ENCODE measurements at regions of chr15 and their contacts with region 1.

Region 1: GRCh38 chr15:51281368-51281967 is 56.9 kb downstream of the CYP19A1 start:
- DNase-seq: peak in 1 of 2 experiments; percentile 79
- H3K4me3 ChIP-seq: no peak overlapping the region
- H3K27ac ChIP-seq: no peak overlapping the region
- H3K4me1 ChIP-seq: no peaks in the 10 kb centered on the region
- H3K27me3 ChIP-seq: no peaks in the 10 kb centered on the region
- CTCF ChIP-seq: peak; percentile 80 to 83 (median 81)
- EP300 ChIP-seq: no peak
- POLR2A ChIP-seq: no peak
- RAD21 ChIP-seq: peak; percentile 80 to 86

Region 2: DNA sequence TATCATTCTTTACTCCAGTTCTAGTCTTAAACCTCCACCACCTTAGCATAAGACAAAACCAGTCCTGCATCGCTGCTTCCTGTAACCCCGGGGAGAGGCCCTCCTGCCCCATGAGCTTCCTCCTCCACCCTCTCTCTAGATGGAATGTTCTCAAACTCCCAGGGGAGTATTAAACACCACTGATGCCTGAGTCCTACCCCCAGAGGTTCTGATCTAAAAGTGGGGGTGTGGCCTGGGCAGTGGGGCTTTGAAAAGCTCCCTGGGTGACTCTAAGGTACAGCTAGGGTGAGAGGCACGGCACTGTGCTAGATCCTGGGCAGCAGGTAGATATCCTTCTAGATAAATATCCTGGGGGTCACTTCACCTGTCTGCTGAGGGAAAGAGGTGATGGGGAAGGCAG is 46.9 kb before region 1 on chr15:
- CTCF ChIA-PET with region 1: interaction called, 23 read pairs
- POLR2A ChIA-PET with region 1: no interaction called
- DNase-seq: no peak
- H3K4me3 ChIP-seq: no peak overlapping the region
- H3K27ac ChIP-seq: no peak overlapping the region
- H3K4me1 ChIP-seq: peaks cover 0 to 2% (median 1%) of the 10 kb centered on the region in 4 experiments; a peak in 1 of 7 replicates
- H3K27me3 ChIP-seq: no peaks in the 10 kb centered on the region
- CTCF ChIP-seq: no peak
- EP300 ChIP-seq: no peak
- POLR2A ChIP-seq: no peak
- RAD21 ChIP-seq: no peak

Region 3: GRCh38 chr15:51267703-51268083 is 13.8 kb before region 1 on chr15:
- CTCF ChIA-PET with region 1: interaction called, 28 read pairs
- POLR2A ChIA-PET with region 1: no interaction called
- DNase-seq: peak in 1 of 2 experiments; percentile 52
- H3K4me3 ChIP-seq: peak overlapping the region; percentile 53 to 69 (median 56)
- H3K27ac ChIP-seq: no peak overlapping the region
- H3K4me1 ChIP-seq: peaks cover 0 to 8% (median 3%) of the 10 kb centered on the region in 4 experiments; a peak in 5 of 7 replicates
- H3K27me3 ChIP-seq: peaks cover 3 to 29% (median 25%) of the 10 kb centered on the region in 4 experiments
- CTCF ChIP-seq: no peak
- EP300 ChIP-seq: no peak
- POLR2A ChIP-seq: no peak
- RAD21 ChIP-seq: no peak

Region 4: GRCh38 chr15:51312166-51313097 is 31.0 kb after region 1 on chr15:
- CTCF ChIA-PET with region 1: interaction called, 20 read pairs
- POLR2A ChIA-PET with region 1: no interaction called
- DNase-seq: no peak
- H3K4me3 ChIP-seq: no peak overlapping the region
- H3K27ac ChIP-seq: no peak overlapping the region
- H3K4me1 ChIP-seq: no peaks in the 10 kb centered on the region
- H3K27me3 ChIP-seq: 0 out of 7 replicates have a peak, but pooled peaks cover 0 to 3% (median 0%) of the 10 kb centered on the region in 4 experiments
- CTCF ChIP-seq: no peak
- EP300 ChIP-seq: no peak
- POLR2A ChIP-seq: no peak
- RAD21 ChIP-seq: no peak

Region 5: DNA sequence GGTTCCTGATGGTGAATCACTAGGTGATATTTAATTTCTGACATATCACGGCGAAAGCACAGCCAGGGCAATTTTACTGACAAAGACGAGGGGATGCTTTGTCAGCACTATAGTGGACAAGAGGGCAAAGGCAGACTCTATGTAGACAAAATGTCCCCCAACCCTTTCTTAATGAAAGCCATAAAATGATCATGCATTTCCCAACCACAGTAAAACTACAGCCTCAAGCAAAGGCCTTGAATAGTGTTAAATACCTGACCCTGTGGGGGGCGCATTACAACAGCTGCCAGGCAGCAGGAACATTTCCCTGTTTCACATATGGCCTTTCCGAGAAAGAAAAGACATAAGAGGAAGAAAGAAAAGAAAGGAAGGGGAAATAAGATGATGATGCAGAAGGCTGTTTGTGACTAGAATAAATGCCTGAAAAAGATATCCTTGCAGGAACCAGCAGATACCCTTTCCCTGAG is 109.5 kb after region 1 on chr15:
- CTCF ChIA-PET with region 1: interaction called, 11 read pairs
- POLR2A ChIA-PET with region 1: no interaction called
- DNase-seq: peak in 1 of 2 experiments; percentile 62
- H3K4me3 ChIP-seq: no peak overlapping the region
- H3K27ac ChIP-seq: no peak overlapping the region
- H3K4me1 ChIP-seq: peaks cover 6 to 14% (median 10%) of the 10 kb centered on the region in 4 experiments; a peak in 6 of 7 replicates
- H3K27me3 ChIP-seq: no peaks in the 10 kb centered on the region
- CTCF ChIP-seq: no peak
- EP300 ChIP-seq: no peak
- POLR2A ChIP-seq: no peak
- RAD21 ChIP-seq: no peak

Region 6: DNA sequence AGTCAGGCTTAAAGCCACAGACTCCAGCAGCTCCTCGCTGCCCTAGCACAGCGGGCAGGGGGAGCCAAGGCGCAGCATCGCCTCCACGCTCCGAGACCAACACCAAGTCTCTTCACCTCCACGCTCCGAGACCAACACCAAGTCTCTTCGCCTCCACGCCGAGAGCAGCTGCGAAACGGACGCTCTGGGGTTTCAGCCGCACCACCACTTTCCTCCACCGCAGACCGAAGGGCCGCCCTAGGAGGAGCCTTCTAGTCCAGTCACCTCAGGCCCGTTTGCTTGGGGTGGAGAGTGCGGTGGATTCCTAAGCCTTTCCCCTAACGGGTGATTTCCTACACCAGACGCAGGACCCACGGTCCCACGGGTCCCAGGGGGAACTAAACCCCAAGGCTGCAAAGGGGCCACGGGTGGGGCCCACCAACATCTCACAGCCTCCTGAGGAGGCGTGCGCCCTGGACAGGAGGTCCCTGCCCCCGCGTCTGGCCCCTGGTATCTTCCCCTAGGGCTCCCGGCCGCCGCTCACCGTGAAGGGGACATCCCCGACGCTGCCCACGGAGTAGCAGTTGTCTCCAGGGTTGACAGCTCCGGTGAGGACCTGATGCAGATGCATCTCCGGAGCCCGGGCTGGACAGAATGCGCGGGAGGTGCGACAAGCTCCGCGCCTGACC is 340.6 kb after region 1 on chr15:
- CTCF ChIA-PET with region 1: no interaction called
- POLR2A ChIA-PET with region 1: no interaction called
- DNase-seq: peak in 1 of 2 experiments; percentile 72
- H3K4me3 ChIP-seq: peak overlapping the region; percentile 92 to 99 (median 96)
- H3K27ac ChIP-seq: no peak overlapping the region
- H3K4me1 ChIP-seq: peaks cover 0 to 5% (median 4%) of the 10 kb centered on the region in 4 experiments; a peak in 4 of 7 replicates
- H3K27me3 ChIP-seq: peaks cover 0 to 10% (median 4%) of the 10 kb centered on the region in 4 experiments; a peak in 5 of 7 replicates
- CTCF ChIP-seq: peak in 2 of 3 experiments; percentile 0 to 9; a peak in 1 of 4 replicates
- EP300 ChIP-seq: no peak
- POLR2A ChIP-seq: no peak
- RAD21 ChIP-seq: no peak